Heart left ventricle (tissue), 16 donors: ENCODE measurements at regions of chr9 and their contacts with region 1.

Region 1: GRCh38 chr9:106726070-106726815 is 136.7 kb upstream of the ZNF462 start:
- DNase-seq: peak in 3 of 5 donors; percentile 15 to 45 (median 44)
- ATAC-seq: peak; percentile 83 to 92 (median 88)
- H3K4me3 ChIP-seq: no peak overlapping the region
- H3K27ac ChIP-seq: peak overlapping the region in 3 of 12 donors; percentile 30 to 52 (median 49)
- H3K4me1 ChIP-seq: peaks cover 0 to 42% (median 6%) of the 10 kb centered on the region in 12 donors
- H3K27me3 ChIP-seq: no peaks in the 10 kb centered on the region
- CTCF ChIP-seq: no peak
- POLR2A ChIP-seq: no peak

Region 2: DNA sequence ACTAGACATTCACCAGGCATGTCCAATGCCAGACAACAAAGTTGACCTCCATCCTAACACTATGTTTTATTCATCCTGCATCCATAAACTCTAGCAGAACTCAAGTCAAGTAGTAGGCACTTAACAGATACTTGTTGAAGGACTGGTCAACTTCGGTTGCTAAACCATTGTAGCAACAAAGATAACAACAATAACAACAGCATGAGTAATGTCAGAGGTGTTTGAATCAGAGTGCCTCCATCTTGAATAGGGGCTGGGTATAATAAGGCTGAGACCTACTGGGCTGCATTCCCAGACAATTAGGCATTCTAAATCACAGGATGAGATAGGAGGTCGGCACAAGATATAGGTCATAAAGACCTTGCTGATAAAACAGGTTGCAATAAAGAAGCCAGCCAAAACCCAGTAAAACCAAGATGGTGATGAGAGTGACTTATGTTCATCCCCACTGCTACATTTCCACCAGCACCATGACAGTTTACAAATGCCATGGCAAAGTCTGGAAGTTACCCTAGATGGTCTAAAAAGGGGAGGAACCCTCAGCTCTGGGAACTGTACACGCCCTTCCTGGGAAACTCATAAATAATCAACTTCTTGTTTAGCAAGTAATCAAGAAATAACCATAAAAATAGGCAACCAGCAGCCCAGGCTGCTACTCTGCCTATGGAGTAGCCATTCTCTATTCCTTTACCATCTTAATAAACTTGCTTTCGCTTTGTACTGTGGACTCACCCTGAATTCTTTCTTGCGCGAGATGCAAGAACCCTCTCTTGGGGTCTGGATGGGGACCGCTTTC is 43.6 kb before region 1 on chr9:
- intact Hi-C with region 1: no loop called
- DNase-seq: no peak
- ATAC-seq: peak; percentile 18 to 77 (median 60)
- H3K4me3 ChIP-seq: no peak overlapping the region
- H3K27ac ChIP-seq: no peak overlapping the region
- H3K4me1 ChIP-seq: peaks cover 0 to 7% (median 0%) of the 10 kb centered on the region in 12 donors
- H3K27me3 ChIP-seq: no peaks in the 10 kb centered on the region
- CTCF ChIP-seq: no peak
- POLR2A ChIP-seq: no peak

Region 3: DNA sequence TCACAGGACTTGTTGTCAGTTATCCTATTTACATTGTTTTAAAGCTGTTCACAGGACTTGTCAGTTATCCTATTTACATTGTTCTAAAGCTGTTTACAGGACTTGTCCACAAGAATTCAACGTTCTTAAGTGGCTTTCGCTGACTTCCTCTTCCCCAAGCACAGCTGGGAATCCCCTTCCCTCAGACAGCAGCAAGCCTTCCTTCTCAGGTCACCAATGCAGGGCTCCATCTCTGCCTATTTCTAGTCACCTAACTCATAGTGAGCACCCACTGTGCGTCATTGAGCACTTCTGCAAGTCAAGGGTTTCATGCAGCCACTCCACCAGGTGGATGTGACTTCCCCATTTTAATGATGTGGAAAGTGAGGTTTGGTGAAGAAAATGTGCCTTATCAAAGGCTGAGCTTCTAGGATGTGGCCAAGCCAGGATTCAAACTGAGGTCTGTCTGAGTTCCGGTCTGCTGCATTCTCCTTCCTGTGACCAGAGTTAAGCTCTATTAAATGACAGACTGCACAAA is 27.0 kb after region 1 on chr9:
- intact Hi-C with region 1: no loop called
- DNase-seq: no peak
- ATAC-seq: no peak
- H3K4me3 ChIP-seq: no peak overlapping the region
- H3K27ac ChIP-seq: no peak overlapping the region
- H3K4me1 ChIP-seq: peaks cover 0 to 11% (median 0%) of the 10 kb centered on the region in 12 donors
- H3K27me3 ChIP-seq: no peaks in the 10 kb centered on the region
- CTCF ChIP-seq: no peak
- POLR2A ChIP-seq: no peak

Region 4: GRCh38 chr9:106772945-106773344 is 46.7 kb after region 1 on chr9:
- intact Hi-C with region 1: no loop called
- DNase-seq: no peak
- ATAC-seq: no peak
- H3K4me3 ChIP-seq: no peak overlapping the region
- H3K27ac ChIP-seq: no peak overlapping the region
- H3K4me1 ChIP-seq: peaks cover 0 to 8% (median 0%) of the 10 kb centered on the region in 12 donors
- H3K27me3 ChIP-seq: no peaks in the 10 kb centered on the region
- CTCF ChIP-seq: no peak
- POLR2A ChIP-seq: no peak

Region 5: GRCh38 chr9:106830527-106831150 is 104.4 kb after region 1 on chr9:
- intact Hi-C with region 1: loop called in 1 of 10 experiments (anchors 10 kb)
- DNase-seq: peak in 2 of 5 donors; percentile 16 to 28
- ATAC-seq: peak; percentile 55 to 88 (median 77)
- H3K4me3 ChIP-seq: no peak overlapping the region
- H3K27ac ChIP-seq: peak overlapping the region in 9 of 12 donors; percentile 1 to 75 (median 29)
- H3K4me1 ChIP-seq: peaks cover 0 to 17% (median 12%) of the 10 kb centered on the region in 12 donors
- H3K27me3 ChIP-seq: no peaks in the 10 kb centered on the region
- CTCF ChIP-seq: no peak
- POLR2A ChIP-seq: no peak

Region 6: GRCh38 chr9:106892632-106893031 is 166.4 kb after region 1 on chr9:
- intact Hi-C with region 1: no loop called
- DNase-seq: peak in 4 of 5 donors; percentile 24 to 64 (median 56)
- ATAC-seq: peak; percentile 64 to 90 (median 84)
- H3K4me3 ChIP-seq: no peak overlapping the region
- H3K27ac ChIP-seq: peak overlapping the region in 6 of 12 donors; percentile 8 to 57 (median 30)
- H3K4me1 ChIP-seq: peaks cover 0 to 55% (median 22%) of the 10 kb centered on the region in 12 donors
- H3K27me3 ChIP-seq: no peaks in the 10 kb centered on the region
- CTCF ChIP-seq: no peak
- POLR2A ChIP-seq: no peak

Region 7: DNA sequence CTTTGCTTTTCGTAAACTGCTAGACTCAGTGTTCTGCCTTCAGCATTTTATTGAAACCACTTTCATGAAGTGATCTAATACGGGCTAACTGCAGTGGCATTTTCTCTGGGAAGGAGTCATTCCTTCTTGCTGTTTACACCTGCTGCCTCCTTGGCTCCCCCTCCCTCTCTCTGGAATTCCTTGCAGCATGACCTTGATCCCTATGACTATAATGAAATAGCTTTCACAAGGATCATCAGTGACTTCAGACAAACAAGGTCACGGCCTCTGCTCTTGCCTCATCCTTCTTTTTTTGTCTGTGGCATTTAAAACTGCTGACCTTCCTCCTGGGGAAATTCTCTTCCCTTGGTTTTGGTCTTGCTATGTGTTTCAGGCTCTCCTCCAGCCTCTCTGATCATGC is 226.9 kb after region 1 on chr9:
- intact Hi-C with region 1: loop called in 1 of 10 experiments (anchors 10 kb)
- DNase-seq: no peak
- ATAC-seq: peak in 1 of 4 donors; percentile 32
- H3K4me3 ChIP-seq: no peak overlapping the region
- H3K27ac ChIP-seq: no peak overlapping the region
- H3K4me1 ChIP-seq: peaks cover 0 to 7% (median 0%) of the 10 kb centered on the region in 12 donors
- H3K27me3 ChIP-seq: no peaks in the 10 kb centered on the region
- CTCF ChIP-seq: no peak
- POLR2A ChIP-seq: no peak